ENCODE measurements at regions of chr1 and their contacts with region 1.

Region 1: DNA sequence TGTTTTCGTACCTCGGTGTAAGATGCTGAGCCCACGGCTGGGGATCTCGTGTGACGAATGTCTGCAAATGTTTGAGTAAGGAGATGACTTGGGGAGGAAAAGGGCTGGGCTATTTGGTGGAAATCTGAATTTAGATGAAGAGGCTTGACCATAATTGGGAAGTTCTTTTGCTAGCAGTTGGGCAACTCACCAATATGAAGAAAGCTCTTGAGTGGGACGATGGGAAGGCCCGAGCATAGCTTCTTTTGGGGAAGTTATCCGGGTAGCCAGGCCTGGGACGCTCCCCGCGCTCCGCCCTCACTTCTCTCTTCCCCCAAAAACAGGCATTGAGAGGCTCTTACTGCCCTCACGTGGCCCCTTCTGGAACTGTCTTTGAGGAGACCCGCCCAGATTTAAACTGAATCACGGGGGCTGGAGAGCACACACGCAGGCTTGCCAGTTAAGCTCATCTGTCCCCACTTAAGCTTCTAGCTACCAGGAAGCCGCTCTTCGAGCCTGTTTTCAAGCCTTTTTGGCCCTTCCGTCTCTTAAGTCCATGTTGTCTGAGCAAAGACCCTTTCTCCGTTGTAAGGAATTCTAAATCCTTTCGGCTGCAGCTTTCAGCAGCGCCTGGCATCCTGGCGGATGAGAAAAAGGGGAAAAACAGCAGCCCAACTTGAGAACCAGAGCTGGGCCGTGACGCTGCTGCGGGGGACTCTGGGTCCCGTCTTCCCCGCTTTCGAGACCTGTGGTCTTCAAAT is 93.1 kb downstream of the NID1 start:
- DNase-seq: peak; percentile 68
- ATAC-seq: peak; percentile 98
- H3K4me3 ChIP-seq: peak overlapping the region; percentile 15 to 25; a peak in 3 of 4 replicates
- H3K27ac ChIP-seq: no peak overlapping the region
- H3K4me1 ChIP-seq: peaks cover 4 to 11% of the 10 kb centered on the region in 2 experiments
- H3K27me3 ChIP-seq: no peaks in the 10 kb centered on the region
- CTCF ChIP-seq: peak; percentile 80 to 84 (median 82)
- POLR2A ChIP-seq: peak; percentile 49
- RAD21 ChIP-seq: peak; percentile 96

Region 2: DNA sequence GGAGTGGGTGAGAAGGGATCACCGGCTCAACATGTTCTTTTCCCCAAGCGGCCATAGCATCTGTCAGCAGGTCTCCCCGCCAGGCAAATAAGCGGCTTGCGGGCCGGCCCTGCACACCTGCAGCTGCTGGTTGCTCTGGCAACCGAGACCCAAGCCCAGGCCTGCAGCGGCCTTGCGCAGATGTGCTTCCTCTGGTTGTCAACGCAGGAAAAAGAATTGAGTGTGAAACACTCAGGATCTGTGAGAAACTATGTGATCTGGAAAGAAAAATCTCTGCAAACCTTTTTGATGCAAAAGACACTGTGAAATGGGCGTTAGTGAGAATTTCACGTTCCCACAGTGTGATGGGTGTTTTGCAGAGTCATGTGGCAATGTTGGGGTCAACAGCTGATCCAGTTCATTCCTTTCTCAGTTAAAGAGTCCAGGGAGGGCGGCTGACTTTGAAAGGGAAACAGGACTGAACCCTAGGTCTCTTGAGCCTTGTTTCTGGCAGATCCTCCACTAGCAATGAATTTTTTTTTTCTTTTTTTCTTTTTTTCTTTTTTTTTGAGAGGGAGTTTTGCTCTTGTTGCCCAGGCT is 871.5 kb before region 1 on chr1:
- CTCF ChIA-PET with region 1: no interaction called
- POLR2A ChIA-PET with region 1: no interaction called
- RAD21 ChIA-PET with region 1: no interaction called
- intact Hi-C with region 1: loop called (anchors 5 kb)
- DNase-seq: no peak
- ATAC-seq: no peak
- H3K4me3 ChIP-seq: no peak overlapping the region
- H3K27ac ChIP-seq: no peak overlapping the region
- H3K4me1 ChIP-seq: peaks cover 4 to 14% of the 10 kb centered on the region in 2 experiments; a peak in 3 of 4 replicates
- H3K27me3 ChIP-seq: no peaks in the 10 kb centered on the region
- CTCF ChIP-seq: no peak
- POLR2A ChIP-seq: no peak
- RAD21 ChIP-seq: no peak

Region 3: DNA sequence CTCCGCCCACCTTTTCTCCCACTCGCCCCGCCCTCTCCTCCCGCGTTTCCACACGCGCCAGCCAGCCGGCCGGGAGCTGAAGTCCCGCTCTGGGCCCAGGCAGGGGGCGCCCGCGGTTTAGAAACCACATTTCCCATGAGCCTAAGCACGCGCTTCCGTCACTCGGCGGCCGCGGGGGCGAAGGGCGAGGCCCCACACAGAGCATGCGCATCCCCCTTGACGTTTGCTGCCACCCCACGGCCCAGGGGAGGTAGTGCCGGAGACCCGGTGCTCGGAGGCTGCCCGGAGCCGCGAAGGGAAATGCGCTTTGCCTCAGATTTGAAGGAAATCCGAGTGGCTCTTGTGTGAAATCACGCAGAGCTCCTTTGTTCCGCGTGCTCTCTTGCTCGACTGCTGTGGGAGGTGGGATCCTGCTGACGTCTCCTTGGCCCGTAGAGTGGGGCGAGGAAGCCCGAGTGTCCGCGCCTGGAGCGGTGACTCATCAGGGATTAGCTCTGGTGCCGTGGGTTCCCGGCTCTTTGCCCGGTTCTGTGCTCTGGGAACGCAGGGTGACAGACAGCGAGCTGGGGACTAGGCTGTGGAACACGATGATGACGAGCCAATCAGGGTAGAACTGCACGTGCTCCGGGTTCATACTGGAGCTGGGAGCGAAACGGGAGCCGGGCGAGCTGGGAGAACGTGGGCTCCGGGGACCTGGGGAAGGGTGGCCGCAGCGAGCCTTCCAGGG is 467.1 kb before region 1 on chr1:
- CTCF ChIA-PET with region 1: interaction called, 14 read pairs
- POLR2A ChIA-PET with region 1: no interaction called
- RAD21 ChIA-PET with region 1: no interaction called
- intact Hi-C with region 1: no loop called
- DNase-seq: peak; percentile 98
- ATAC-seq: peak; percentile 86
- H3K4me3 ChIP-seq: peak overlapping the region; percentile 75 to 84
- H3K27ac ChIP-seq: peak overlapping the region; percentile 99
- H3K4me1 ChIP-seq: peaks cover 10 to 38% of the 10 kb centered on the region in 2 experiments; a peak in 3 of 4 replicates
- H3K27me3 ChIP-seq: no peaks in the 10 kb centered on the region
- CTCF ChIP-seq: peak; percentile 77 to 84 (median 77); a peak in 5 of 6 replicates
- POLR2A ChIP-seq: peak; percentile 52
- RAD21 ChIP-seq: peak; percentile 69

Region 4: DNA sequence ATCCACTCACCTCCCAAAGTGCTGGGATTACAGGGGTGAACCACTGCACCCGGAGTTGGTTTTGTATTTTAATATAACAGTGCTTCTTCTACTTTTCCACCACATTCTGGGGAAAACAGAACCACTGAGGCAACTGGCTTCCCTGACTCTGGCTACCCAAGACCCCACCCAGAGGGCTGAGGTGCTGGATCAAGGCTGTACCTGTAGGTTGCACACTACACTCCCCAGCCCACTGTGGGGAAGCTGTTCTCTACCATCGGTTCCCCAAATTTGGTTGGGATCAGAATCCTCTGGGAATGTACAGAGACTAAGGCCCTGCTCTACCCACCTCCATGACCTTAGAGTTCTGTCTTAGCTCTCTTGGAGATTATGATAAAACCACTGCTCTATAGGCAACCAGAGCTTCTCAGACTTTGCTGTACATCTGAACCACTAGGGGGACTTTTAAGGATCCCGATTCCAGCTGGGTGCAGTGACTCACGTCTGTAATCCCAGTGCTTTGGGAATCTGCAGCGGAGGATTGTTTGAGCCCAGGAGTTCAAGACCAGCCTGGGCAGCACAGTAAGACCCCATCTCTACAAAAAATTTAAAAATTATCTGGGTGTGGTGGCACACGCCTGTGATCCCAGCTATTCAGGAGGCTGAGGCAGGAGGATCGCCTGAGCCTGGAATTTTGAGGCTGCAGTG is 373.7 kb before region 1 on chr1:
- CTCF ChIA-PET with region 1: interaction called, 10 read pairs
- POLR2A ChIA-PET with region 1: no interaction called
- RAD21 ChIA-PET with region 1: interaction called in 1 of 2 experiments, 3 read pairs
- intact Hi-C with region 1: loop called (anchors 5 kb)
- DNase-seq: peak; percentile 52
- ATAC-seq: peak; percentile 85
- H3K4me3 ChIP-seq: no peak overlapping the region
- H3K27ac ChIP-seq: no peak overlapping the region
- H3K4me1 ChIP-seq: peaks cover 0 to 5% of the 10 kb centered on the region in 2 experiments; a peak in 1 of 4 replicates
- H3K27me3 ChIP-seq: no peaks in the 10 kb centered on the region
- CTCF ChIP-seq: peak; percentile 52 to 66 (median 63); a peak in 5 of 6 replicates
- POLR2A ChIP-seq: no peak
- RAD21 ChIP-seq: peak; percentile 60

Region 5: GRCh38 chr1:235783148-235783776 is 188.5 kb before region 1 on chr1:
- CTCF ChIA-PET with region 1: interaction called, 10 read pairs
- POLR2A ChIA-PET with region 1: no interaction called
- RAD21 ChIA-PET with region 1: no interaction called
- intact Hi-C with region 1: loop called (anchors 2 kb)
- DNase-seq: peak; percentile 26
- ATAC-seq: peak; percentile 49
- H3K4me3 ChIP-seq: no peak overlapping the region
- H3K27ac ChIP-seq: no peak overlapping the region
- H3K4me1 ChIP-seq: no peaks in the 10 kb centered on the region
- H3K27me3 ChIP-seq: no peaks in the 10 kb centered on the region
- CTCF ChIP-seq: peak; percentile 23 to 78 (median 29); a peak in 4 of 6 replicates
- POLR2A ChIP-seq: no peak
- RAD21 ChIP-seq: peak; percentile 80

Region 6: DNA sequence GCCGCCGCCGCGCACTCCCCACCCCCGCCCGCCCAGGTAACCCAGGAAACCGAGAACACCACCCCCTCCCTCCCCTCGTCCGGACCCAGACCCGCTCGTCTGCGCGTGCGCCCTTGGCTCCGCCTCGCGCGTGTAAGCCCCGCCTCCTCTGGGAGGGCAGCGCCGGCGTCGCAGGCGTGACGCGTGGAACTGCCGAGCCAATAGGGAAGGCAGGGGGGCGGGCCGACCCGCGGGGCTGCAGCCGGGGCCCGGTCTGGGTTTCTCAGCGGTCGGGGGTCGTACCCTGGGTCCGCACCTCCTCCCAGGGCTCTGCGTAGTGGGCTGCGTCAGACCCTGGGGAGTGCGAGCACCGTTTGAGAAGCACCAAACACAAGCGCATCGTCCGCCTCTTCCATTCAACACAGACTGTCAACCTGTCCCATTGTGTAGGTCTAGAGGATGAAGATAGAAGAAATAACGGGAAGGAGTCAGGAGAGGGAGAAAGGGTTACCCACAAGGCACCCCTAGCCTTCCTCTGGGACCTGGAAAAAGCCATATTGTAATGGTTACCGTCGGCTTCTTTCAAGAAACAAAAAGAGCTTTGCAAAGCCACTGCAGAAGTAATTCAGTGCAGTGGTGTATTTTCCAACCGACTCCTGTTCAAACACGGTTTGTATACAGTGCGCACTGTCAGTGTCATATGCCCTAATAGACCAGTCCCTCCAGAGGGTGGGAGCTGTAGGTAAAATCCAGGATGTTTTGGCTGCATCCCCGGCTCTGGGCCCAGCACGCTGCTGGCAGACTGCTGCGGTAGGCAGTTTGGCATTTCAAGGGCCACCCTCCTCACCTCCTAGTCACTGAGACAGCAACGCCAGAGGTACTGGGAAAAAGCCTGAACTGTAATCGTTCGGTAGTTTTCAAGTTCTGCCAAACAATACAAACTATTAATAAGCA is 104.6 kb before region 1 on chr1:
- CTCF ChIA-PET with region 1: interaction called, 15 read pairs
- POLR2A ChIA-PET with region 1: no interaction called
- RAD21 ChIA-PET with region 1: interaction called, 5 to 6 read pairs
- intact Hi-C with region 1: loop called (anchors 1 kb)
- DNase-seq: peak; percentile 84
- ATAC-seq: peak; percentile 92
- H3K4me3 ChIP-seq: peak overlapping the region; percentile 66 to 69
- H3K27ac ChIP-seq: peak overlapping the region; percentile 46
- H3K4me1 ChIP-seq: peaks cover 9 to 20% of the 10 kb centered on the region in 2 experiments; a peak in 2 of 4 replicates
- H3K27me3 ChIP-seq: no peaks in the 10 kb centered on the region
- CTCF ChIP-seq: no peak
- POLR2A ChIP-seq: no peak
- RAD21 ChIP-seq: no peak

Region 7: DNA sequence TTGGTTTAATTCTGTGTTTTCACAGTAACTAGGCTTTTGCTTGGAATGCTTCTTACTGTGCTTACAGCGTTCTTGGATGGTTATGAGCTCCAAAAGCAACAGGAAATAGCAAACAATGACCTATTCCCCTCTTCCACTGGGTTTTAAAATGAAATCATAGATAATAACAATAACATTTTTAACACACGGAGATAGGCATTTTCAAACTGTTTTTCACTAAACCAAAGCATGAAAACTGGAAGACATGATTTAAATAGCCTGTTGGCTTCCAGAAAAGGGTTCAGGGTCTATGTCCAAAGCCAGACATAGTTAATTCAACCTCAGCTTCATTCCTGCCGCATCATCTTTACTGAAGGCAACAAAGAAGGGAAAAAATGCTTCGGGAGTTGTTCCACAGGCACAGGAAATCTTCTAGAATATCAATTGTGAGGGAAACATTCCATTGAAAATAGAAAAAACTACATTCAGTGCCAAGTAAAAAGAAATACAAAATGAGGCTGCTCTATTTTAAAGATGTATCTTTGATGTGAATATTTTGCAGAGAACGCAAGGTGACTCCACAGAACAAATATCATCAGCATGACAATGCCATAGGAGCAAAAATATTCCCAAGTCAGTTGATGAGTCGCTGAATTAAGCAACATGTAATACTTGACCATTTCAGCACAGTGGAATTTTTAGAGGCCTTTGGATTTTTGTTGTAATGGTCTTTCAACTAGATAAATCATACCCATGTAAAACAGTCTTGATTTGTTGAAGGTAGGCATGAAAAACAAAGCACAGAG is 12.5 kb after region 1 on chr1:
- CTCF ChIA-PET with region 1: interaction called, 12 read pairs
- POLR2A ChIA-PET with region 1: no interaction called
- RAD21 ChIA-PET with region 1: no interaction called
- intact Hi-C with region 1: no loop called
- DNase-seq: no peak
- ATAC-seq: no peak
- H3K4me3 ChIP-seq: no peak overlapping the region
- H3K27ac ChIP-seq: no peak overlapping the region
- H3K4me1 ChIP-seq: no peaks in the 10 kb centered on the region
- H3K27me3 ChIP-seq: no peaks in the 10 kb centered on the region
- CTCF ChIP-seq: no peak
- POLR2A ChIP-seq: no peak
- RAD21 ChIP-seq: no peak

Region 8: DNA sequence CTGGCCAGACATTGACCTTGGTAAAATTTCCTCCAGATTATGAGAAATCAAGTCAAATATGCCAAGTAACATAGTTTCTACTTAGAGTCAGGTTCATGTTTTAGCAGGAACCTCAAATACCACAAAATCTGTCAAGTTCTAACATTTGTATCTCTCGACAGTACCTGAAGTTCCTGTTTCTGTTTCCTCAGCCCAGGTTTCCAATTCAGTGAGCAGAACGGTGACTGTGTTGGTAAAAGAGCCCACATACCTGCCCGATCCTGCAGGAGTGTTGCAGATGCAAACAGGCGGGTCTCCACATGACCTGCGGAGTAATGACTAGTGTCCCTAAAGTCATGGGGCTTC is 494.2 kb after region 1 on chr1:
- CTCF ChIA-PET with region 1: no interaction called
- POLR2A ChIA-PET with region 1: no interaction called
- RAD21 ChIA-PET with region 1: no interaction called
- intact Hi-C with region 1: no loop called
- DNase-seq: no peak
- ATAC-seq: no peak
- H3K4me3 ChIP-seq: no peak overlapping the region
- H3K27ac ChIP-seq: no peak overlapping the region
- H3K4me1 ChIP-seq: peaks cover 1 to 7% of the 10 kb centered on the region in 2 experiments; a peak in 3 of 4 replicates
- H3K27me3 ChIP-seq: peaks cover 6% of the 10 kb centered on the region; the same call in 1 of the 2 replicates
- CTCF ChIP-seq: no peak
- POLR2A ChIP-seq: no peak
- RAD21 ChIP-seq: no peak

Measured in HCT116 (cell line).